ENCODE measurements at regions of chr2 and their contacts with region 1.

Region 1: DNA sequence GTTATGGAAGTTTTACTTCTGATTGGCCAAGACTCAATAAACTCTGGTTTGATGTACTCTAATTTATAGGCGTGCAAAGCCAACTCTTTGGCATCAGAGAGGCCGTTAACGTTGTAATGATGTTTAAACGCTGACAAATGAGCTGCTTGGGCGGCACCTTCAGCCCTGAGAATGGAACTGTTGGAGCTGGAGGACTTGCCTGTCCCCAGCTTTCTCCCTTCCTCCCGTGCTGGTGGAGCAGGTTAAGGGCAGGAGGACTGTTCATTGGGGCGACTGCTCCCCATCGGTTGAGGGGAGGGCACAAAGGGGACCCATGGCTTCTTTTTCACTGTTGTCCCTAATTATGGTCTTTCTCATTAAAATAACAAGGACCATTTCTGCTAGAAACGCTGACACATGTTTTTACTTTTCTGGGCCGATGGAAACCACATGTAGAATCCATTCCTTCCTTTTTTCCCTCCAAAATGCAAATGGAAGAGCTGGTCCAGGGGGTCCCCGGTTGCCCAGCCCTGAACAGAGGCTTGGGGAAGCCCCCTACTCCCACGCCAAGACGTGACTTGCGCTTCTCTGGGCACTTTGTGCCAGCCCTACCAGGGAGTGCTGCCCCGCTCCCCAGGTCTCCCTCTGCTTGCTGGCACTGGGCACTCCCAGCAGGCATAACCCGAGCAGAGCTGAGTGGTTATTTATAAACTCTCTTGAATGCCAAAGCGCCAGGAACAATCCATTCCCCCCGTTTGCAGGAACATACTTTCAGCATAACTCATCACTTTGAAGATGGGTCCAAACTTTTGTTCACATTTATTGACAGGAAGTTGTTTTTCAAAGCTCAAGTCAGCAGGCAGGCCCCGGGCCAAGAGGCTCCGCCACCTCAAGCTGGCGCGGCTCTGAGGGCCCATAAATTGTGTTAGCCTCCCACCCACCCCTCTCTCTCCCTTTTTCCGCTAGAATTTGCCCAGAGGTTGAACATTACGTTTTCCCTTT is 170.1 kb downstream of the ASB1 start:
- DNase-seq: peak; percentile 90
- H3K4me3 ChIP-seq: peak overlapping the region in 1 of 4 donors; percentile 17
- H3K27ac ChIP-seq: peak overlapping the region; percentile 87 to 91 (median 89)
- H3K4me1 ChIP-seq: peaks cover 27 to 70% (median 68%) of the 10 kb centered on the region in 4 donors
- H3K27me3 ChIP-seq: no peaks in the 10 kb centered on the region
- CTCF ChIP-seq: no peak
- EP300 ChIP-seq: peak; percentile 94
- POLR2A ChIP-seq: peak; percentile 19

Region 2: DNA sequence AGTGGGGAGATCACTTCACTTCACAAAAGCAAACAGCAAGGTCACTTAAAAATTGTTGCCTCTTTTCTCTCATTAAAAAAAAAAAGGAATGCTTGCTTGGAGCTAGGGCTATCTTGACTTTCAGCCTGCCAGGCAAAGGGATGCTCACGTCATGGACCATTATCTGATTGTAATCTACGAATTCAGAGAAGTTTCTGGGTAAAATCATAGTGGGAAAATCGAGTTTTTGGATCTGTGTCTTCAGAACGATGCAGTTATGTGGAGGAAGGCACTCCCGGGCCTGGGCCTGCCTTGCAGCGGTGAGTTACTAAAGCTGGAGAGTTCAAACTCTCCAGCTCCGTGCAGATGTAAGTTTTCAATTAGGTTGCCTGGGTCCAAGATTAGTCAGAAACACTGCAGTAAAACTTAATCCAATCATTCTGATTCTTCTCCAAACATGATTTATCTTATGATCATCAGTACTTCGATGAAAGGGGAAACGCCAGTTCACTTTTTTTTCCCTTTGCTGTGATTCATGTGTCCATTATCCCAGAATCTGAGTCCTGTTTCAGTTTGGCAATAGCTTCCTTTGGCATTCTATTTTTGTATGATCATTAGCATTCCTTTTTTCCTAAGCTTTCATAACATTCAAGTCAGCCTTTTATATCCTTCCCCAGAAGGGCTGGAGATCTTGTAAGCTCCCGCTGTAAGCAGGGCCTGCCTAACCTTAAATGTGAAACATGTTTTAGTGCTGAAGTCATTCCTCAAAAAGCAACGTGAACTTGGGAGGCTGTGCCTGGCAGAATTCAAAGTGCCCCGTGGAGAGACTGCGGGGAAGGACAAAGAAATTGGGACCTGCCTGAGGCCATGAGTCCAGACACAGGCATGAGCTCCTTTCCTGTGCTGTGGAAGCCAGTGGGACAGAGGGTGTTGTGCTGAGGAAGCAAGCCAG is 131.7 kb after region 1 on chr2:
- intact Hi-C with region 1: loop called (anchors 2 kb)
- DNase-seq: no peak
- H3K4me3 ChIP-seq: peak overlapping the region in 3 of 4 donors; percentile 8 to 44 (median 28)
- H3K27ac ChIP-seq: peak overlapping the region; percentile 91 to 96 (median 95)
- H3K4me1 ChIP-seq: peaks cover 28 to 71% (median 68%) of the 10 kb centered on the region in 4 donors
- H3K27me3 ChIP-seq: no peaks in the 10 kb centered on the region
- CTCF ChIP-seq: no peak
- EP300 ChIP-seq: no peak
- POLR2A ChIP-seq: no peak

Measured in esophagus muscularis mucosa (tissue), 4 donors.